ENCODE measurements at regions of chr1 and their contacts with region 1.

Region 1: DNA sequence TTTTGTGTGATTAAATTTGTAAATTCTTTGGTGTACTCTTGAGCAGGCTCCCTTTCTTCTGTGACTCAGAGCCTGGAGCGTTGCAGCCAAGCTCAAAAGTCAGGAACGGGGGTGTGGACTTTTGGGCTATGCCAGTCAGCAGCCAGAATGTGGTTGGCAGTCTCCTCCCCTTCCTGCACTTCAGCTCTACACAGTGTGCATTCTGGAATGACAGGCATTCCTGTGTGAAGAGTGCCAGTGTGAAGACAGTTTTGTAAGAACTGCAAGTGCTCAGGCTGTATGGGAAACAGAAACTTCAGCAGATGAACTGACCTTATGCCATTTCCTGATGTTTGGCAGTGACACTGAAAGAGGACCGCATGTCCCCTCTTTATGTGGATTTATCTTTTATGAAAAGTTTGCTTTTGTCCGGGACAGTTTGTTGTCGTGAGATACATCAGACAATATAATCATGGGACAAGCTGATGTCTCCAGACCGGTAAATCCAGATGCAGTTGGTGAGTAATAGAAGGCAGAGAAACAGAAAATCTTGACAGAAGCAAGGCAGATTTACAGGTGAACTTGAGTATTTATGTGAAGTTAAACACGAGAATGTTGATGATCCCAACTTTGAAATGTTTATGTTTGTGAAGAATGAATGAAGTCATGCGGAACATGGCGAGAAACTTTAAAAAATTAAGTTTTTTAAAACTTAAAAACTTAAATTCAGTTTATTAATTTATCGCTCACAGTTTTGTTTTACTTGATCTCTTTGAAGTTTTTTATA is 67.7 kb upstream of the RCC1 start:
- DNase-seq: peak; percentile 96
- ATAC-seq: peak; percentile 100
- H3K4me3 ChIP-seq: peak overlapping the region; percentile 0 to 38 (median 35); a peak in 3 of 6 replicates
- H3K27ac ChIP-seq: peak overlapping the region; percentile 65
- H3K4me1 ChIP-seq: peaks cover 31% of the 10 kb centered on the region
- H3K27me3 ChIP-seq: no peaks in the 10 kb centered on the region
- CTCF ChIP-seq: no peak
- EP300 ChIP-seq: peak in 1 of 2 experiments; percentile 46; a peak in 1 of 4 replicates
- POLR2A ChIP-seq: peak; percentile 73 to 96; a peak in 3 of 4 replicates
- RAD21 ChIP-seq: no peak

Region 2: DNA sequence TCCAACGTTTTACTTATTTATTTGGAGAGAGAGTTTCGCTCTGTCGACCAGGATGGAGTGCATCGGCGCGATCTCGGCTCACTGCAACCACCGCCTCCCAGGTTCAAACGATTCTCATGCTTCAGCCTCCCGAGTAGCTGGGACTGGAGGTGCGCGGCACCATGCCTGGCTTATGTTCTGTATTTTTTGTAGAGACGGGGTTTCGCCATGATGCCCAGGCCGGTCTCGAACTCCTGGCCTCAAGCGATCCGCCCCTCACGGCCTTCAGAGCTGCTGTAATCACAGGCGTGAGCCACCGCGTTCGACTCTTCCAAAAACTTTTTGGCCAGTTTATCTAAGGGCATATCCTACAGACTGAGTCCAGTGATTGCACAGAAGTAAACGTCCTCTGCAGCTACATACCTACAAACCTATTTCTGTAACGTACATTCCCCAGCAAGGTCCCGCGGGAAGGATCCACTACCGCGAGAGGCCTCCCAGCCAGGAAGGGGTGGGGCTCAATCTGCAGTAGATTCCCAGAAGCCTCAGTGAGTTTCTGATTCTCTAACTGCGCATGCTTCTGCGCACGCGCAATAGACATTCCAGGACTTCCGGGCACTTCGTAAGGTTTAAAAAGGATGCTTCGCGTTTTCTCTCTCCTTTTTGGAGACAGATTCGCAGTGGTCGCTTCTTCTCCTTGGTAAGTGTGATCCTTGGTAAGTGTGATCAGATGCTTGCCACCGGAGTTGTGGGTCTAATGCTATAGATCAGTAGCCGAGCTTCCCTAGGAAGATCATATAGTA is 67.5 kb after region 1 on chr1 and contains the start of gene RCC1:
- CTCF ChIA-PET with region 1: no interaction called
- POLR2A ChIA-PET with region 1: interaction called, 26 read pairs
- in situ Hi-C with region 1: no loop called
- intact Hi-C with region 1: no loop called
- DNase-seq: peak; percentile 99
- ATAC-seq: peak; percentile 83
- H3K4me3 ChIP-seq: peak within 1 kb of the TSS; percentile 95 to 97 (median 96)
- H3K27ac ChIP-seq: peak within 1 kb of the TSS; percentile 86
- H3K4me1 ChIP-seq: peaks cover 36% of the 10 kb centered on the region
- H3K27me3 ChIP-seq: no peaks in the 10 kb centered on the region; a peak in 1 of 5 replicates
- CTCF ChIP-seq: no peak
- EP300 ChIP-seq: no peak
- POLR2A ChIP-seq: peak; percentile 98 to 100
- RAD21 ChIP-seq: no peak
- total RNA-seq, gene RCC1: 80.8 and 102 TPM in 2 replicates

Measured in HepG2 (cell line).